Panc1 (cell line): ENCODE measurements at regions of chr20 and their contacts with region 1.

Region 1: DNA sequence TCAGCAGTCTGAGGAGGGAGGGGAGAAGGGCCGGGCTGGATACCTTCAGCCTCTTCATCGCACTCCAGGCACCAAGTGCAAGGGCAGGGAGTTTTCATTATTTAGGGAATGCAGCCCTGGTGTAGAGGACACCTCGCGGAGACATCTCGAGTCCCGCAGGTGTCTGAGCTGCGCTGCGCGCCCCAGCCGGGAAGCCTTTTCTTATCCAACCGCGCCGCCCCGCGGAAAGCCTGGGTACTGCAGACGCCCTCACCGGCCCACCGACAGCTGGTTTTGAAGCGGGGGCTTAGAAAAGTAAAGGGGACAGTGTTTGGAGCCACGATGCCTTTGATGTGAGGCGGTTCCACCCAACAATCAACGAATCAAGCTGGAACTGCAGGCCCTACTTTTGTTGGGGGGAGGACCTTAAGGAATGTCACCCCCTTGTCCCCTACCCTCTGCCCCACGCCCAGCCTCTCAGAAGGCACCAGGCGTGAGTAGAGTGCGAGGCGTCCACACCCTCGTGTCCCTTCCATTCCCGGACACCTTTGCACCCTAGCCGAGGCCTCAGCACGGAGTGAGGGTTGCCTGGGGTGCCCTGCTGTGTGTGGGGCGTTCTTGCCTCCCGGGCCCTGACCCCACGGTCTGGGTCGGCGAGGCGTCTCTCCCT is 8.6 kb downstream of the NKX2-2 start:
- DNase-seq: peak; percentile 10
- ATAC-seq: peak; percentile 75
- H3K4me3 ChIP-seq: no peak overlapping the region
- H3K27ac ChIP-seq: no peak overlapping the region
- H3K4me1 ChIP-seq: no peaks in the 10 kb centered on the region
- H3K27me3 ChIP-seq: no peaks in the 10 kb centered on the region
- CTCF ChIP-seq: peak; percentile 92

Region 2: GRCh38 chr20:20837574-20838021 is 667.7 kb before region 1 on chr20:
- CTCF ChIA-PET with region 1: no interaction called
- POLR2A ChIA-PET with region 1: no interaction called
- in situ Hi-C with region 1: no loop called
- intact Hi-C with region 1: loop called (anchors 10 kb)
- DNase-seq: no peak
- ATAC-seq: peak; percentile 85
- H3K4me3 ChIP-seq: peak overlapping the region in 1 of 2 experiments; percentile 37; a peak in 2 of 4 replicates
- H3K27ac ChIP-seq: no peak overlapping the region
- H3K4me1 ChIP-seq: no peaks in the 10 kb centered on the region
- H3K27me3 ChIP-seq: no peaks in the 10 kb centered on the region
- CTCF ChIP-seq: peak; percentile 86

Region 3: GRCh38 chr20:20860078-20860806 is 645.0 kb before region 1 on chr20:
- CTCF ChIA-PET with region 1: no interaction called
- POLR2A ChIA-PET with region 1: no interaction called
- in situ Hi-C with region 1: no loop called
- intact Hi-C with region 1: loop called (anchors 10 kb)
- DNase-seq: peak; percentile 54
- ATAC-seq: peak; percentile 88
- H3K4me3 ChIP-seq: no peak overlapping the region
- H3K27ac ChIP-seq: no peak overlapping the region
- H3K4me1 ChIP-seq: no peaks in the 10 kb centered on the region
- H3K27me3 ChIP-seq: no peaks in the 10 kb centered on the region
- CTCF ChIP-seq: peak; percentile 94